Activated CD4-positive, alpha-beta memory T cell treated with anti-CD3 and anti-CD28 coated beads, Interleukin-2, amount 10 ng/mL, durations not matched to agents 7 days and 5 days (primary cell): ENCODE measurements at regions of chr17 and their contacts with region 1.

Region 1: DNA sequence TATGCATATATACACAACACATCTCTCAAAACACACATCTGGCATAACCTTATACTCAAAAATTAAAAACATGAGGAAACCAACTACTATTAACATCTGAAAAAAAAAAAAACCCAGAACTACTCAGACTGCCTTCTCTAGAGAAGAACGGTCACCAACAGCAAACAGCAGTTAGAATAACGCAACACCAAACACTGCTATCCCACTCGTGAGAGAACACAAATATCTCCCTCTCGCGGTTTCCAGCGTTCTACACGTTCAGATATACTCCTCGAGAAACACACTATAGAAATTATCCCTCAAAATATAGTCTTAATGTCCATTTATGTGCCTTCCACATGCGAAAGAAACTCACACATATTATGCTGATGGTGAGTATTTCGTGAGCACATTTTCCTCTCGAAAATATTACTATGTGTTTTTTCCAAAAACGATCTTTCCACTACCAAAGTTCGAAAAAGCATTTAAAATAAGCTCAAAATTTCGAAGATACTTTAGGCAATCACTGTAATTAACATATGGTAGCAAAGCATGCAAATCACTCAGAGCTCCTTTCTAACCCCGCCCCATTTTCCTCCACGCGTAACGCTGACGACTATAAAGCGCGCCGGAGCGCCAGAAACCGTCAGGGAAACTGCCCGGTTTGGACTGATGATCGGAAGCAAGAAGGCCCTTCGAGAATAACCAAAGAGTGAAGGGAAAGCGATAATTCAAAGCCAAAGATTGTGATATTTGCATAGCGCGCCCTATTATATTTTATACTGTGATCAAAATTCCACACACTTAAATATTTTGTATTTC is 60.1 kb downstream of the TEX14 start:
- DNase-seq: peak; percentile 97
- H3K4me3 Mint-ChIP-seq: no peak overlapping the region
- H3K27ac Mint-ChIP-seq: no peak overlapping the region
- H3K4me1 Mint-ChIP-seq: peaks cover 3% of the 10 kb centered on the region
- H3K27me3 Mint-ChIP-seq: peaks cover 2% of the 10 kb centered on the region

Region 2: DNA sequence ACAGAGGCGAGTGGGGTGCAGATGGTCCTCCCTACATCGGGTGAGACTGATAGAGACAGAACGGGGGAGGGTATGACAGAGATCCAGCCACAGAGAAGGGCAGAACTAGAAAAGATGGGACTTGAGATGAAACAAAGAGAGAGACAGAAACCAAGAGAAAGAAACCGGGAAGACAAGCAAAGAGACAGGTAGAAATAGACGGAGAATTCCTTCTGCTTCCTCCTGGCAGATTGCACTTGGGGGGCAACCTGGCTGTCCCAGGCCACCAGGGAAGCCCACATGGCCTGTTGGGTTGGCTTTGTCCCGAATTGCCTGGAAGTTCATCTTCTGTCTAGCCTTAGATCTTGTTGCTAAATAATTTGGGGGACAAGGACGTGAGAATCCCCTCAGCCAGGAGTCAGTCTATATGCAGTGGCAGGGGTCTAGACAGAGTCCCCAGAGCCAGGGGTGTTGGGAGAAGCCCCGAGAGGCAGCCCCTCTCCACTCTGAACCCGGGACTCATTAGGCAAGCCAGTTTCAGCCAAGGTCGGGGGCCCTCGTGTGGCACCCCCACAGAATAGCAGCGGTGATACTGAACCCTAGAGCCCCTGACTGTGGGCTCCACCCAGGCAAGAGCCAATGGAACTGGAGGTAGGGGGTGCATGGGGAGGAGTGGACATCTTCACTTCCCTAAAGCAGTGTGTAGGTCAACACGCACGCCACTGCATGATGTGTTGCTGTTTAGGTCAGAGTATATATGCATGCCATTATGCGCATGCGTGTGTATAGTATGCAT is 302.5 kb before region 1 on chr17:
- CTCF ChIA-PET with region 1: no interaction called
- POLR2A ChIA-PET with region 1: interaction called, 30 read pairs
- DNase-seq: peak; percentile 85
- H3K4me3 Mint-ChIP-seq: peak overlapping the region; percentile 98
- H3K27ac Mint-ChIP-seq: peak overlapping the region; percentile 99
- H3K4me1 Mint-ChIP-seq: peaks cover 37% of the 10 kb centered on the region
- H3K27me3 Mint-ChIP-seq: peaks cover 2% of the 10 kb centered on the region

Region 3: GRCh38 chr17:58507123-58507634 is 124.5 kb before region 1 on chr17:
- CTCF ChIA-PET with region 1: no interaction called
- POLR2A ChIA-PET with region 1: interaction called, 11 read pairs
- DNase-seq: no peak
- H3K4me3 Mint-ChIP-seq: no peak overlapping the region
- H3K27ac Mint-ChIP-seq: no peak overlapping the region
- H3K4me1 Mint-ChIP-seq: peaks cover 22% of the 10 kb centered on the region
- H3K27me3 Mint-ChIP-seq: no peaks in the 10 kb centered on the region

Region 4: GRCh38 chr17:58595326-58595725 is 36.4 kb before region 1 on chr17:
- CTCF ChIA-PET with region 1: no interaction called
- POLR2A ChIA-PET with region 1: interaction called, 96 read pairs
- DNase-seq: no peak
- H3K4me3 Mint-ChIP-seq: no peak overlapping the region
- H3K27ac Mint-ChIP-seq: no peak overlapping the region
- H3K4me1 Mint-ChIP-seq: no peaks in the 10 kb centered on the region
- H3K27me3 Mint-ChIP-seq: no peaks in the 10 kb centered on the region

Region 5: GRCh38 chr17:58703137-58703972 is 71.6 kb after region 1 on chr17:
- CTCF ChIA-PET with region 1: no interaction called
- POLR2A ChIA-PET with region 1: interaction called, 54 read pairs
- DNase-seq: no peak
- H3K4me3 Mint-ChIP-seq: no peak overlapping the region
- H3K27ac Mint-ChIP-seq: peak overlapping the region; percentile 61
- H3K4me1 Mint-ChIP-seq: peaks cover 52% of the 10 kb centered on the region
- H3K27me3 Mint-ChIP-seq: no peaks in the 10 kb centered on the region

Region 6: DNA sequence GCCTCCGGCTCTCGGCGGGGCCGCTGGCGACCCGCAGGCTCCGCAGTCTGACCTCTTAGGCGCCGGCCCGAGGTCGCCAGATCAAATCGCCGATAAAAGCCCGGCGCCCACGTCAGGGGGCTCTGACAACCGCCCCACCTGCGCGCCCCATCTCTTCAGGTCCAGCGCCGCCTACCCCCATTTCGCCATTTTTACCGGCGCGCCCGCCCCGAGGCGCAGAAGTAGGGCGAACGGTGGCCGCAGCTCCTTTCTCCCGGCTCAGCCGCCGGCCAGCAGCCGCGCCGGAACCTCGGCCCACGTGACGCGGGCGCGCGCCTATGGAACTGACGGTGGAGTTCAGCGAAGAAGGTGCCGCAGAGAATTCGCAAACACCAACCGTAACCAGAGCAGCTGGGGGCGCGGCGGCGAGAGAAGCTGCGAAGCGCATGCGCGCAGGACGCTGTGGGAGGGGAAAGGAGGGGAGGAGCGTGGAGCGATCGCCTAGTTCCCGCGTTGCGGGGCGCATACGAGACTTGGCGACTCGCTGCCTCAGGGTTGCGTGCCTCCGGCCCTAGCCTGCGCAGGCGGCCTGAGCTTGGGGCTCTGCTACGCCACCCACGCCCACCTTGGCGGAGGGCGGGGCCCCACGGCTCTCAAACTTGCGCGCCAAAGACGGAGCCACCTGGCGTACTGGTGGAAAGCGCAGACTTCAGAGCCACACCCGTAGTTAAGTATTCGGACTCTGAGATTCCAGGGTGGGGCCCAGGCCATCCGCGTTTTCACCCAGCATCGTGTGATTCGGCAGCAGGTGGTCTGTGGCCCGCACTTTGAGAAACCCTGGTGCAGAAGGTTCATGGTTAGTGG is 475.0 kb after region 1 on chr17 and contains the start of gene TRIM37:
- CTCF ChIA-PET with region 1: interaction called, 4 read pairs
- POLR2A ChIA-PET with region 1: interaction called, 26 read pairs
- DNase-seq: peak; percentile 99
- H3K4me3 Mint-ChIP-seq: peak within 1 kb of the TSS; percentile 98
- H3K27ac Mint-ChIP-seq: peak within 1 kb of the TSS; percentile 91
- H3K4me1 Mint-ChIP-seq: peaks cover 61% of the 10 kb centered on the region
- H3K27me3 Mint-ChIP-seq: no peaks in the 10 kb centered on the region
- total RNA-seq, gene TRIM37: 23.7 to 24.5 TPM